ENCODE measurements at regions of chr2 and their contacts with region 1.

Region 1: DNA sequence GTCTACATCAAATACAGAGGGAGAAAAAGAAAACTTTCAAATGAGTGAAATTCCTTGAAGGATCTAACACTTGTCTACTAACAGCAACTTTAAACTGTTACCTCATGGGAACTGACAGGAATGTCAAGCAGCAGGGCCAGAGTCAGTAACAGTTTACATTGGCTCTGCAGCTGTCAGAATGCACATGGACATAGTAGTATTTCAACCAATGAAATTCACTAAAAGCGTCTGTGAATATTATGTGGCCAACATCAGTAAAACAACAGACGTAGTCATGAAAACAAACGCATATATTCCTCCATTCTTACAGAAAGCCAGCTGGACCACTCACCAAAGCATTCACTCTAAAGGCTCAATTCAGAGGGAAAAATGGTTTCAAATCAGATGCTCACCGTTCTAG is 79.3 kb upstream of the RNU4ATAC start:
- DNase-seq: no peak
- H3K4me3 ChIP-seq: no peak overlapping the region
- H3K27ac ChIP-seq: no peak overlapping the region
- H3K4me1 ChIP-seq: no peaks in the 10 kb centered on the region
- H3K27me3 ChIP-seq: no peaks in the 10 kb centered on the region
- CTCF ChIP-seq: no peak
- POLR2A ChIP-seq: no peak

Region 2: DNA sequence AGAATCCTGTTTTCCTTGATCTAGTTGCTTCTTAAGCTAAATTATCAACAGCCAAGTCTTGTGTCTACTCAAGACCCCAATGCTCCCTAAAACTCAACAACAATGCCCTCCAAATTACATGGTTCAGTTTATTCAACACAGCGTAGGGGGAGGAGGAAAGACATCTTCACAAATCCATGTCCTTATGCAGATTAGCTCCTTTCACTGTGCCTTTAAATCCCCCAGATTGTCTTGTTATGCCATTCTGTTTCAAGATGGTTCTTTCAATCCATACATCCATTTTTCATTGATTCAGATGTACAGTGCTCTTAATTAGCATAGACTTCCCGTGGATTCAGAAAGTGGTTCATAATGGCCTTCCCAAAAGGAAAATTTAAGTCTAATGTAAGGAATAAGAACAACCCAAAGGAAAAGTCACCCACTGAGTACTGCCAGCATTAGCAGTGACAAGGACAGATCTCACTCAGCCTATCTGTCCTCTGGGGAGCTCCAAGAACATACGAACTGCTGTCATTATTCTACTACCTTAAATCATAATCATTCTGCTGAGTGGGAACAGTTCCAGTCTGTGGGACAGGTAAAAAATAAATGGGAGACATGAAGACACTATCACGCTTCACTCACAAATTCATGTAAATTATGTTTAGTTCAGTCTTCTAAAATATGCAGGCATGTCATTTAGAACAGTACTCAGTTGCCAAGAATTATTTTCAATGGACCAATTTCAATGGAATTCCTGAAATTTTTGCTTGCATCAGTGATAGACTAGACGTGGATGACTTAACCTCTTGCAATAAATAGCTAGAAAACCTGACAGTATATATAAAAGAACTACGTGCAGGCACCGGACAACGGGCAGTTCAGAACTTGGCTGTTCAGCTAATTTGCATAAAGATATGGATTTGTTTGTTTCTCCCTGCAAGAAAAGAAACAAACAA is 20.4 kb after region 1 on chr2:
- intact Hi-C with region 1: loop called (anchors 2 kb)
- DNase-seq: no peak
- H3K4me3 ChIP-seq: no peak overlapping the region
- H3K27ac ChIP-seq: no peak overlapping the region
- H3K4me1 ChIP-seq: no peaks in the 10 kb centered on the region
- H3K27me3 ChIP-seq: no peaks in the 10 kb centered on the region
- CTCF ChIP-seq: no peak
- POLR2A ChIP-seq: no peak

Measured in breast epithelium (tissue), 4 donors.